ENCODE measurements at regions of chr13 and their contacts with region 1.

Region 1: DNA sequence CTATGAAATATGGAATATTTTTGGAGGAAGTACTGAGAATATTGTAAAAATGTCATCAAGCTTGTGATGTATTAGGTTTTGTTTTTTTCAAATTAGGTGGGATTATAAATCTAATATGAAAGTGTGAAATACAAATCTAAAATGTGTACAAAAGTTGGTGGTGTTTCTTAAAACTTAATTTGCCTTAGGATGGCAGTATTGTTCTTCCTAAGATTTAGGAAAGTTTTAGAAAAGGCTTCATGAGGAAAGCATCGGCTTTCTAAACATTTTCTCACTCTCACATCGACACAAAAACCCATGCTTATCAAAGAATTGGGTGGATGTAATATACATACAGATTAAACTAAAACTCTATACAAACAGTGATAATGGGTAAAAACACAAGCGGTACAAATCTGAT is 972.0 kb upstream of the PCDH20 start:
- DNase-seq: no peak
- ATAC-seq: no peak
- H3K4me3 ChIP-seq: no peak overlapping the region
- H3K4me3 Mint-ChIP-seq: no peak overlapping the region
- H3K27ac ChIP-seq: no peak overlapping the region
- H3K27ac Mint-ChIP-seq: no peak overlapping the region
- H3K4me1 ChIP-seq: no peaks in the 10 kb centered on the region
- H3K4me1 Mint-ChIP-seq: no peaks in the 10 kb centered on the region
- H3K27me3 ChIP-seq: no peaks in the 10 kb centered on the region
- H3K27me3 Mint-ChIP-seq: no peaks in the 10 kb centered on the region

Region 2: DNA sequence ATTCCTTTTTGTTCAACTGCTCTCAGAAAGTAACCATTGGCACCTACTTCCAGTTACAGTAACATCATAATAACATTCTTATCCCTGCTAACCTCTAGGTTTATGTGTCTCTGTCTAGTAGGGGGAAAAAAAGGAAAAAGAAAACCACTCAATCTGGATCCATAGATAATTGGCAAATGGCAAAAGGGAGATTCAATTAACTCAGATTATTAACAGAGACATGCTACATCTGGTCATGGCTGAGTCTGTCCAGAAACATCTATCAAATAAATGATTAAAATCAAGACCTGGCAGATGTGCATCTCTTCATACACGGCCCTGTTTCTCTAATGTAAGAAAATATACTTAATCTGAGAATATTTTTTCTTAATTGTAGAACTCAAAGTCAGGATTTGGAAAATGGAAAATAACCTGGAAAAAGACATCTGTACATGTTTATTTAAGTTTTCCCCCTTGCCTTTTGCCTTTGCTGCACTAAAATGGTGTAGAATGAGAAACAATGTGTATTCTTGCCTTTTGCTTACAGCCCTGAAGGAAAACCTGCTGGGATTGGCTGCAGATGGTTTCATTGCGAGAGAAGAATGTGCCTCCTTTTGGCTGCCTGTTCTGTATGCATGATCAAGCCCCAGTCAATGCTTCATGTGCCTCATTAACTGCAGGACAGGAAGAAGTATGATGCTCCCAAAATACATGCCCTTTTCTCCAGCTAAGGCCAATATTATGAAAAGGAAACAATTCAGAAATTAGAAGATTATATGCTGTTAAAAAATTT is 50.4 kb before region 1 on chr13:
- CTCF ChIA-PET with region 1: no interaction called
- POLR2A ChIA-PET with region 1: no interaction called
- intact Hi-C with region 1: loop called in 1 of 2 experiments (anchors 10 kb)
- DNase-seq: no peak
- ATAC-seq: no peak
- H3K4me3 ChIP-seq: no peak overlapping the region
- H3K4me3 Mint-ChIP-seq: no peak overlapping the region
- H3K27ac ChIP-seq: no peak overlapping the region
- H3K27ac Mint-ChIP-seq: no peak overlapping the region
- H3K4me1 ChIP-seq: no peaks in the 10 kb centered on the region
- H3K4me1 Mint-ChIP-seq: no peaks in the 10 kb centered on the region
- H3K27me3 ChIP-seq: no peaks in the 10 kb centered on the region
- H3K27me3 Mint-ChIP-seq: no peaks in the 10 kb centered on the region